Activated CD4-positive, alpha-beta memory T cell treated with anti-CD3 and anti-CD28 coated beads, Interleukin-2, amount 10 ng/mL, durations not matched to agents 7 days and 5 days (primary cell): ENCODE measurements at regions of chr18 and their contacts with region 1.

Region 1: GRCh38 chr18:12376718-12377555 is at the start of gene AFG3L2:
- DNase-seq: peak; percentile 100
- H3K4me3 Mint-ChIP-seq: peak within 1 kb of the TSS; percentile 91
- H3K27ac Mint-ChIP-seq: peak within 1 kb of the TSS; percentile 91
- H3K4me1 Mint-ChIP-seq: peaks cover 47% of the 10 kb centered on the region
- H3K27me3 Mint-ChIP-seq: peaks cover 2% of the 10 kb centered on the region
- total RNA-seq, gene AFG3L2: 31.9 to 32.8 TPM

Region 2: GRCh38 chr18:12031846-12032245 is 345.1 kb before region 1 on chr18:
- CTCF ChIA-PET with region 1: no interaction called
- POLR2A ChIA-PET with region 1: no interaction called
- DNase-seq: no peak
- H3K4me3 Mint-ChIP-seq: no peak overlapping the region
- H3K27ac Mint-ChIP-seq: no peak overlapping the region
- H3K4me1 Mint-ChIP-seq: peaks cover 3% of the 10 kb centered on the region
- H3K27me3 Mint-ChIP-seq: no peaks in the 10 kb centered on the region

Region 3: DNA sequence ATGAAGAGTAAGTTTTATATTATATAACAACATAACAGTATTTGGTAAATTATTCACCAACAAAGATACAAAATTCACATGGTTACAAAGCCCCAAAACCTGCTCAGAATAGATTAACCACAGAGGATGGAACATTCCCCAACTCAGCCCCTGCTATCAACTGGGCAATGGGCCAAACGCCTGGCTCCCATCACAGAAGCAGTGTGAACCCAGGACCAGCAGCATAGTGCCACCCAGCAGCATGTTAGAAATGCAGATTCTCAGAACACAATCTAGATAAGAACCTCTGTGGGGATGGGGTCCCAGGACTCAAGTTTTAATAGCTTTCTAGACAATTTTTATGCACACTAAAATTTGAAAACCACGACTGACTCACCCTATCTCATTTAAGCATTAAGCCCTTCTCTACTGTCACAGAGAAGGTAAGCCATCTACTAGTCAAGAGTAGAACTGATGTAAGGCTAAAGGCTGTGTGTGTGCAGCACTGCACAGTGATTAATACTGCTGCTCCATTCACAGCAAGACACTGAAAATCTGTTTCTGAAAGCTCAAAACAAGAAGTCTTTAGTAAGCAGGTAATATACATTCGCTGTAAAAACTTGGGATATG is 15.1 kb before region 1 on chr18:
- CTCF ChIA-PET with region 1: interaction called, 3 read pairs
- POLR2A ChIA-PET with region 1: interaction called, 17 read pairs
- DNase-seq: no peak
- H3K4me3 Mint-ChIP-seq: no peak overlapping the region
- H3K27ac Mint-ChIP-seq: no peak overlapping the region
- H3K4me1 Mint-ChIP-seq: peaks cover 4% of the 10 kb centered on the region
- H3K27me3 Mint-ChIP-seq: no peaks in the 10 kb centered on the region

Region 4: GRCh38 chr18:12408247-12408869 is 31.4 kb after region 1 on chr18:
- CTCF ChIA-PET with region 1: interaction called, 7 read pairs
- POLR2A ChIA-PET with region 1: interaction called, 21 read pairs
- DNase-seq: no peak
- H3K4me3 Mint-ChIP-seq: peak overlapping the region; percentile 43
- H3K27ac Mint-ChIP-seq: no peak overlapping the region
- H3K4me1 Mint-ChIP-seq: peaks cover 40% of the 10 kb centered on the region
- H3K27me3 Mint-ChIP-seq: peaks cover 34% of the 10 kb centered on the region